ENCODE measurements at regions of chr14 and their contacts with region 1.

Region 1: DNA sequence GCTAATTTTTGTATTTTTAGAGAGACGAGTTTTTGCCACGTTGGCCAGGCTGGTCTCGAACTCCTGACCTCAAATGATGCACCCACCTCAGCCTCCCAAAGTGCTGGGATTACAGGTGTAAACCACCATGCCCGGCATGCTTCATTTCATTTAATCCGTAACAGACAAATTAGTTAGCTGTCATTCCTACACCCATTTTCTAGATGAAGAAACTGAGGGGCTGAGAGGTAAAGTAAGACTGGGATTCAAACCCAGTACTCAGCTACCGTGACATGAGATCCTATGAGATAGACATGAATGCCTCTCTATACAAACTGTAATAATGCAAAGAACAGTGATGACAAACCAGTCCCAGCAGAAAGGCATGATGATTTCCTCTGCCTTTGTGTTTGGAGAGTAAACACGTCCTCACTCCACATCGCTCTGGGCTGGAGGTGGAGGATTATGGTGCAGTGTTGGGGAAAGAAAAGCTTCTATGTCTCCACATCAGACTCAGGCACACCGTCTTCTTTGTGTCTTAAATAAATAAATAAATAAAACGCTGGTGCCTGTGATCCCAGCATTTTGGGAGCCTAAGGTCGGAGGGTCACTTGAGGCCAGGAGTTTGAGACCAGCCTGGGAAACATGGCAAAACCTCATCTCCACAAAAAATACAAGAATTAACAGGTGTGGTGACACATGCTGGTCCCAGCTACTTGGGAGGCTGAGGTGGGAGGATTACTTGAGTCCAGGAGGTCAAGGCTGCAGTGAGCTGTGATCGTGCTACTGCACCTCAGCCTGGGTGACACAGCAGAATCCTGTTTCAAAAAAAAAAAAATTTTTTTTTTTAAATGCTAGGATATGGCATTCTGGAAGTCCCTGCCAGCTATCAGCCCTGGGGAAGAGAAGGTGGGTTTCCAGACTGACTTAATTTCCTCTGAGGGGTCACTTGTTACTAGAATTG is 10.5 kb downstream of the VSX2 start:
- DNase-seq: peak in 1 of 10 donors; percentile 5

Region 2: GRCh38 chr14:74109369-74109768 is 140.3 kb before region 1 on chr14:
- intact Hi-C with region 1: loop called (anchors 1 kb)
- DNase-seq: no peak

Region 3: DNA sequence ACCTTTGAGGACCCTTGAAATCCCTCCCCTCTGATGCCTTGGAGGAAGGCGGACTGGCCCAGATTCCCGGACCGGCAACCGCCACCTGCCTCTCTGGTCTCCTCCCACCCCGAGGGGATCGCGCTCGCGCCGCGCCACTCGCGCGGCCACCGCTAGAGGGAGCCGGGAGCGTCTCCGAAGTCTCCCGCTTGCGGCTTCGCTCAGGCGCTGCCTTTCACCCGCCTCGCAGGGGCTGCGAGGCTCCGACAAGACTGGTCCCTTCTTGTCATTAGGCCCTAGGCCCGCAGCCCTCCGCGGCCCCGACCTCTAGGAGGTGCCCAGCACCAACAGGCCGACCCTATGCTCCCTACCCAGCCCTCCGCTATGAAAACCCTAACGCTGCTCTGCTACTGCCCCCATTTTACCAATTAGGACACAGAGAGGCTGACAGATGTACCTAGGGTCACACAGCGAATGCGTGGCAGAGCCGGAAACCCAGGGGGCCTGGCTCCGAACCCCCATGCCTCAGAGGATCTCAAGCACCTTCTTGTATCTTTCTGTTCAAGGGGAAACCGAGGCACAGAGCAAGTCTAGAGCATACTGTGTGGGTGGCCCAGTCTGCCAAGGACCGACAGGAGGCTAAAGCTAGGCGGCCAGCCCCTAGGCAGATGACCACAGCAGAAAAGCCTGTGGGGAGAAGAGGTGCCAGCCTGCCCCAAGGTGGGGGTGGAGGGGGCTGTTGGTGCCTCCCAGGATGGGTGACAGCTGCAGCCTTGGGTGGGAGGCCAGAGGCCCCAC is 31.8 kb before region 1 on chr14:
- intact Hi-C with region 1: loop called (anchors 1 kb)
- DNase-seq: peak; percentile 61 to 95 (median 76)

Measured in posterior cingulate gyrus (tissue), 11 donors.